ENCODE measurements at regions of chr3 and their contacts with region 1.

Region 1: DNA sequence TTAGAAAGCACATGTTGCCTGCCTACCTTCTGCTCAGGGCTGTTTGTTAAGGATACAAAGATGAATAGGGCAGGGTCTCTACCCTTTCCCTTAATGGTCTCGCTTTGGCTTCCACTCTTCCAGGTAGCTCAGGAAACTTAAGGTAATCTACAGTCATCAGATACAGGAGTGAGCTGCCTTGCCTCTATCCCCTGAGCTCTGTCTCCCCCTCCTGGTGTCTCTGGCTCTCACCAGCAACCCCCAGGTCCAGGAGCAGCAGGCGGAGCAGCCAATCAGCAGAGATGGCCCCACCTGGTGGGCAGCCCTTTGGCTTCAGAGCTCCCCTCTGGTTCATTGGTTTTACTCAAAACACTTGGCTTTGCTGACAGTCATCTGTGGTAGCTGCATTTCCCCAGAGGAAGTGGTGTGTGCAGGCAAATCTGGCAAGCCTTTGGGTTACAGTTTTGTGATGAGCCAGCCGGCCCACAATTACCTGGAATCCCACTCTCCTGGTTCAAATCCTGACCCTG is 8.5 kb upstream of the CX3CR1 start:
- DNase-seq: peak; percentile 93
- CTCF ChIP-seq: peak; percentile 79

Region 2: GRCh38 chr3:38940394-38940793 is 348.0 kb before region 1 on chr3:
- in situ Hi-C with region 1: no loop called
- DNase-seq: no peak
- CTCF ChIP-seq: no peak

Region 3: DNA sequence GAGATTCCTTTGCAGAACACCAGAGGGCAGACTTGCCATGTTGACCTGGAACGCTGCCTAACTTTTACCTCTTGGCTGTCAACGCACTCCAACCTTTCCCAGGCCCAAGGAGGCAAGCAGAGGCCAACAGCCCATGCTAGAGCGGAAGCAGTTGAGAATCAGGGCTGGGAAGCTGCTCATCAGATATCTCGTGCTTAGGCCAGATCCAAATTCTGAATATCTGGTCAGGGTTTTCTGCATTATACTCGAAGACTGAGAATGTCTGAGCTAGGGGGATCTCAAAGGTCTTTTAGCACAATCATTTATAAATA is 98.4 kb before region 1 on chr3:
- in situ Hi-C with region 1: loop called (anchors 5 kb)
- DNase-seq: peak; percentile 83
- CTCF ChIP-seq: peak; percentile 76

Region 4: GRCh38 chr3:39378088-39378487 is 89.7 kb after region 1 on chr3:
- in situ Hi-C with region 1: loop called (anchors 5 kb)
- DNase-seq: peak; percentile 70
- CTCF ChIP-seq: peak; percentile 80